Posterior vena cava (tissue), 2 donors: ENCODE measurements at regions of chr7 and their contacts with region 1.

Region 1: GRCh38 chr7:106056513-106057203 is 55.5 kb downstream of the SYPL1 start:
- DNase-seq: peak; percentile 88

Region 2: DNA sequence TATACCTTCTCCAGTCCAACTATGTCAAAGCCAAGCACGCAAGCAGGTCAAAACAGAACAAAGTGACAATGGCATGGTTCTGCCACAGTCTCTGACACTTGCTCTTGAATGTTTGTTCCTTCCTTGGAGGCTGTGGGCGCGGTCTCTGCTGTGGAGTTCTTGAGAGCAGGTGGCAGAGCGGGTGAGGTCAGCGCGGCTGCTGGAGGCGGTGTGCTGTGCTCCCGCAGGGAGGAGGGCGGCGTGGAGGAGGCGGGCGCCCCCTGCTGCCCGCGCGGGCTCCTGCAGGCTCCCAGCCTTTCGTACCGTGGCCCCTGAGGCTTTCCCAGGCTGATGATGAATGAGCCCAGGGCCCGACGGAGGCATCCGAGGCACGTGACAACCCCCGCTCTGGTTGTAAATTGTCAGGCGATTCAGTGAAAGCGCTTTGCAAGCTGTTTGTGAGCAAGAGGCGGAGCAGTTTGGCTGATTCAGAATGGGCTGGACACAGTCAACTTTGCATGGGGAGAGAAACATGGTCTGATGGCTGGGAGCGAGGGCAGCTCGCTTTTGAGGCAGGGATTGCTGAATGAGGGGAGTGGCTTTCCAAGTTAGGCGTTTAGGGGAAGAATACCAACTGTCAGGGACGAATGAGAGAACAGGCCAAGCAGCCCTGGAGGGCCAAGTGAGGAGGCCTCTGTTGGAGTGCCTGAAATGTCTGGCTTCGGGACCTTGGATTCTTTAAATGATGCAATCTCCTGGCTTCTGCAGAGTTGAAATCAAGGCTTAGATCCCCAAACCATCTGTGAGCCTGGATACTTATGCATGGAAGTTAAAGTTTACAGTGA is 47.0 kb before region 1 on chr7:
- intact Hi-C with region 1: no loop called
- DNase-seq: peak; percentile 95

Region 3: DNA sequence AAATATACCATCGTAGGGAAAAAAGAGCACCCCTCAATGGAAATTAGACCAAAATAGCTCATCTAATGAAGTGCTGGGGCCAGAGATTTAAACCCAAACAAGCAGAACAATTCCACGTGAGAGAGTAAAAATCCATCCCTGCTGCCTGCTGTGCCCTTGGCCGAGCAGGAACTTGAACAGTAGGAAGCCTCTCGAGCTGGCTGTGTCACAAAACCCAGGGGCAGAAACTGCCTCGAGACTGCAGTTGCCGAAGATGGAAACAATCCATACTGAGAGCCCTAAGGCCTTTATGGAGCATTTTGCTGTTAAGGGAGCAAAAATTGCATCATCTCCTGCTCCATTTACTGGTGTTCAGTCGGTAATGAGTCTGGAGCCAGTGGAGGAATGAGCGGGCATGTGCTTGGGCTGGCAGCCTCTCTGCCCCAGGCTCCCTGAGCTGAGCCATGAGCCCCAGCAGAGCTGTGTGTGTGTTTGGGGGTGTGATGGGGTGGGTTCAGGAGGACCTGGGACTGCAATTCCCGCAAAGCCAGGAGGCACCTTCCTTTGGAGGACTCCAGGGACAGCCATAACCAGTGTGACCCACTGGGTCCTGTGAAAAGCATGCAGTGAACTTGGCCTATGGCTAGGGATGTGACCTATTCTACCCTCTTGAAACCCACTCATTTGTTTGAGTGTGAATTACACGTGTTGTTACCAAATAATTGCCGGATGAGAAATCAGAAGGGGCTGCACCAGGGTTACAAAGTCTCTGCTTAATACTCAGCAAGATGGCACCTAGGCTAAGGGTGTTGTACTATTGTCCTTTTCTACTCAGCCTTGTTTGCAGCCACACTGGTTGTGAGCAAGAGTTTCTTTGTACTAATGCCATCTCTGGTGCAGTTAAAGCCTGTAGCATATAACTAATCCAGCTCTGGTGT is 35.2 kb before region 1 on chr7:
- intact Hi-C with region 1: no loop called
- DNase-seq: no peak

Region 4: DNA sequence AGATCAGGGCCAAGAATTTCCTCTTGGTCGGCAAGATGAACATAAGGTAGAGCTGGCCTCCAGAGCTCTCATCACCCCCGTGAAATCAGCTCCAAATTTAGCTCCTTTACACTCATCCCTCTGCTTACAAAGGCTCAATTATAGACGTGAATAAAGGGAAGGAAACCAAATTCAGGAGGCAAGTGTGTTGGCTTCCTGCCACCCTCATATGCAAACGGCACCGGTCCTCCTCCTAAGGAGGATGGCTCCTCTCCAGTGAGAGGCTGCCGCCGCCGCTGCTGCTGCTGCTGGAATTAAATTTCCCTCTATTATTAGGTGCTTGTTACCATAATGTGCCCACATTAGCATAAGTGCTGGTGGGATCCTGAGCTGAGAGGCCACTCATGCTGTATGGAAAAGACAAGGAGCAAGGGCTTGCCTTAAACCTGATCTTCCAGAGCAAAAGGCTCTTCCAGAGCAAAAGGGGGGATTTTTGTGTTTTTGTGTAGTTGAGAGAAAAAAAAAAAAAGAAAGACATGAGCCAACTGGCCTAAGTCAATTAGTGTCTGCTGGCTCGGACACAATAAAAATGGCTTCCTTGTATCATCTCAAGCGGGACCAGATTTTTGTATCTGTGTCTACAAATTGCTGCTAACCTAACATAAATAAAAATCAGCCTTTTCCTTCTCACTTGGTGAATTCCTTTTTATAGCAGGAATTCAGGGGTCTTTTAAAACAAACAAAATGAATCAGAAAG is 25.2 kb before region 1 on chr7:
- intact Hi-C with region 1: no loop called
- DNase-seq: no peak

Region 5: DNA sequence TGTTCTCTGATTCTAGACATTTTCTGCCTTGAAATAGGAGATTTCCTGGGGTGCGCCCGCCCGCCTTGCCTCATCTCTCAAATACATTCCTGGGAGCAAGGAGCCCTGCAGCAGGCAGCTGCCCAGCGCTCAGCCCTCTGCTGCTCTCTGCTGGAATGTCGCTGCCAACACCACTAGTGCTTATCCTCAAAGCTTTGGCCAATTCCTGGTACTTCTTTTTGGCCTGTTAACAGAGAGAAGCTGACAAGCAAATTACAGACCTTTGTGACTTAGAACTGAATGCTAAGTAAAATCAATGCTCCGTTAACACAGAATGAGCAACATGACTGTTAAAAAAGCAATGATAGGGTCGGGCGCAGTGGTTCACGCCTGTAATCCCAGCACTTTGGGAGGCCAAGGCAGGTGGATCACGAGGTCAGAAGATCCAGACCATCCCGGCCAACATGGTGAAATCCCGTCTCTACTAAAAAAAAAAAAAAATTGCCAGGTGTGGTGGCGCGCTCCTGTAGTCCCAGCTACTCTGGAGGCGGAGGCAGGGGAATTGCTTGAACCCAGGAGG is 97.3 kb after region 1 on chr7:
- intact Hi-C with region 1: loop called (anchors 1 to 2 kb)
- DNase-seq: peak; percentile 94